Esophagus muscularis mucosa (tissue), 4 donors: ENCODE measurements at regions of chr14 and their contacts with region 1.

Region 1: GRCh38 chr14:32576088-32576795 is 247.1 kb downstream of the AKAP6 start:
- DNase-seq: no peak
- H3K4me3 ChIP-seq: peak overlapping the region; percentile 29 to 42 (median 37)
- H3K27ac ChIP-seq: peak overlapping the region in 2 of 4 donors; percentile 8 to 10
- H3K4me1 ChIP-seq: peaks cover 16 to 34% (median 29%) of the 10 kb centered on the region in 4 donors
- H3K27me3 ChIP-seq: no peaks in the 10 kb centered on the region
- CTCF ChIP-seq: peak; percentile 93 to 98 (median 93)
- EP300 ChIP-seq: no peak
- POLR2A ChIP-seq: no peak

Region 2: GRCh38 chr14:32710731-32711680 is 134.8 kb after region 1 on chr14:
- intact Hi-C with region 1: loop called (anchors 5 kb)
- DNase-seq: no peak
- H3K4me3 ChIP-seq: peak overlapping the region; percentile 36 to 43 (median 38)
- H3K27ac ChIP-seq: peak overlapping the region; percentile 72 to 80 (median 74)
- H3K4me1 ChIP-seq: peaks cover 15 to 51% (median 43%) of the 10 kb centered on the region in 4 donors
- H3K27me3 ChIP-seq: no peaks in the 10 kb centered on the region
- CTCF ChIP-seq: peak; percentile 39 to 55 (median 43)
- EP300 ChIP-seq: no peak
- POLR2A ChIP-seq: no peak

Region 3: GRCh38 chr14:32998433-32998832 is 422.2 kb after region 1 on chr14:
- intact Hi-C with region 1: loop called (anchors 10 kb)
- DNase-seq: no peak
- H3K4me3 ChIP-seq: no peak overlapping the region
- H3K27ac ChIP-seq: no peak overlapping the region
- H3K4me1 ChIP-seq: peaks cover 0 to 4% (median 0%) of the 10 kb centered on the region in 4 donors
- H3K27me3 ChIP-seq: no peaks in the 10 kb centered on the region
- CTCF ChIP-seq: peak; percentile 40 to 58 (median 40)
- EP300 ChIP-seq: no peak
- POLR2A ChIP-seq: no peak

Region 4: DNA sequence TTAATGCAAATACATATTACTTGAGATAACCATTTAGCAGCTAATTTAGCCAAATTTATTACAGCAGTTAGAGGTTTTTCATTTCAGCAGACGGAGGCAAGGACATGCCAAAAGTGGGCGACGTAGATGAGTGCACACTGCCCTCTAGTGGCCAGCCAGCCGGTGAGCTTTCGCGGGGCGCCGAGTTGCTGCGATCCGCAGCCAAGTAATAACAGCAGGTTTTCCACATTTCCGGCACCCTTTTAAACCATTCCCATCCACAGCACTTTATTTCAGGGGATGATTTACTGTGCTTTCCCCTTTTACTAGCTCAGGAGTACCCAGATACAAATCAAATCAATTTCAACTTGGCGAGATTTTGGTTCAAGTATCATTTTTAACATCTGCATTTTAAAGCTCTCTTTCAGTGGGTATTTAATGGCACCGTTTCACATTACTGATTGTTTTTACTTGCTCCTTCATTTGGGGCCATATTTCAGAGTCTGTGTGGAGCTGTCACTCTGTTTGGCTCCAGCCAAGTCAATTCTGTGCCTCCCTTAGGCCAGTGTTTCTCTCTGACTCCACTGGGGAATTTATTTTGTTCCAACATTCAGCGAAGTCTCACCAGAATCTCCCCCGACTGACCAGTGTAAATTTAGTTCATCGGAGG is 1216.6 kb after region 1 on chr14:
- intact Hi-C with region 1: loop called (anchors 2 kb)
- DNase-seq: peak; percentile 94
- H3K4me3 ChIP-seq: peak overlapping the region; percentile 32 to 41 (median 37)
- H3K27ac ChIP-seq: peak overlapping the region in 3 of 4 donors; percentile 33 to 54 (median 44)
- H3K4me1 ChIP-seq: peaks cover 0 to 28% (median 16%) of the 10 kb centered on the region in 4 donors
- H3K27me3 ChIP-seq: no peaks in the 10 kb centered on the region
- CTCF ChIP-seq: peak; percentile 89 to 96 (median 94)
- EP300 ChIP-seq: no peak
- POLR2A ChIP-seq: no peak